ENCODE measurements at regions of chr6 and their contacts with region 1.

Region 1: DNA sequence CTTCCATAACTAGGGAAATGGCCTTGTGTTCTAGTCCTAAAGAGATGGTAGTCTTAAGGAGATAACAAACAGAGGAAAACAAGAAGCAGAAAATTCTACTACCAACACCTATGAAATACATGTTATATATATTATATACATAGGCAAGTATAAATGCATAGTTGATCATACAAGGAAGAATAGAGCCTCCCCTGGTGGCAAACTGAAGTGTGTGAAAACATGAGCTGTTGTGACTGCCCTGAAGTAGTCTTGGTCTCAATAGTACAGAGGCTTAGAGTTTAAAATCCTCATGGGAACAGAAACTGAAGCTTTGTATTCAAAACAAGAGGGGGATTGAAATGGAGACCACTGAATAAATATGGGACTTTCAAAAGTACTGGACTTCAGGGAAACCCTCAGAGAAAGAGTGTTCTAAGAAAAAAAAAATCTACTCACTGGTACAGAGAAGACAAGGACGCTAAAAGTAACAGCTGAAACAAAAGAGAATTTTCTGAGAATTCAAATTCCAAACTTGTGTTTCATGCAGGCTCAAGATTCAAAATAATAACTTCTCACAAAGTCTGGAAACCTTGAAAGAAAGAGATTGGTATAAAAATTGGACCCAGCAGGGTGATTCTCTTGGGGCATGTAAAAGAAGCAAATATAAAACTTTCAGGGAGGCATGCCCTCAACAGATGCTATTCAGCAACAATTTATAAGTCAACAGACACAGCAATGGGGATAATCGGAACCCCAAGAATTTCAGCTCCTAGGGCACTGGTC is 59.7 kb upstream of the SAMD3 start:
- DNase-seq: no peak
- ATAC-seq: peak; percentile 49
- H3K4me3 Mint-ChIP-seq: no peak overlapping the region
- H3K27ac Mint-ChIP-seq: no peak overlapping the region
- H3K4me1 Mint-ChIP-seq: peaks cover 6% of the 10 kb centered on the region
- H3K27me3 Mint-ChIP-seq: no peaks in the 10 kb centered on the region
- CTCF ChIP-seq: no peak

Region 2: DNA sequence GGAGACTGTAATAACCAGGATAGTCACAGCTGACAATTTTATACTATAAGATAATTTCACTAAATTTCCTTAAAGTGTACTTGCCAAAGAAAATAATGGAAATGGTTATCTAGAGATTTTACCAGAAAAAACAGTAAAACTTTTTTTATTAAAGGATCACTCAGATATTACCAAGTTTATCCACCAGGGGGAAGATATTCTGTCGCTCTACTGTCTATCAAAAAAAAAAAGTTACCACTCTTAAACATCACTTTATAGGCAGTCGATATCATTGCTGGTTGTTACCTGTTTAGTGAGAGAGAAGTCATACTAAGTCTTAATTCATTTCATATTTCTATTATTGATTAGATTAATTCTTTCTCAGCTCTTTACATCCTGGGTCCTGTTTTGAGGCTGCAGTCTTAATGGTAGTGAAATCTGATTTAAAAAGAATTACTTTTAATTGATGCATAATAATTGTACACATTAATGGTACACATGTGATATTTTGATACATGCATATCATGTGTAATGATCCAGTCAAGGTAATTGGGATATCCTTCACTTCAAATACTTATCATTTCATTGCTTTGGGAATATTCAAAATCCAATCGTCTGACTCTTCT is 245.1 kb before region 1 on chr6:
- CTCF ChIA-PET with region 1: interaction called, 4 read pairs
- POLR2A ChIA-PET with region 1: no interaction called
- intact Hi-C with region 1: loop called (anchors 1 kb)
- DNase-seq: no peak
- ATAC-seq: peak; percentile 49
- H3K4me3 Mint-ChIP-seq: no peak overlapping the region
- H3K27ac Mint-ChIP-seq: no peak overlapping the region
- H3K4me1 Mint-ChIP-seq: peaks cover 68% of the 10 kb centered on the region
- H3K27me3 Mint-ChIP-seq: no peaks in the 10 kb centered on the region
- CTCF ChIP-seq: no peak

Region 3: GRCh38 chr6:130076512-130076911 is 205.9 kb before region 1 on chr6:
- CTCF ChIA-PET with region 1: interaction called, 11 read pairs
- POLR2A ChIA-PET with region 1: no interaction called
- intact Hi-C with region 1: loop called (anchors 1 kb)
- DNase-seq: no peak
- ATAC-seq: no peak
- H3K4me3 Mint-ChIP-seq: no peak overlapping the region
- H3K27ac Mint-ChIP-seq: peak overlapping the region; percentile 38
- H3K4me1 Mint-ChIP-seq: peaks cover 18% of the 10 kb centered on the region
- H3K27me3 Mint-ChIP-seq: no peaks in the 10 kb centered on the region
- CTCF ChIP-seq: no peak

Region 4: DNA sequence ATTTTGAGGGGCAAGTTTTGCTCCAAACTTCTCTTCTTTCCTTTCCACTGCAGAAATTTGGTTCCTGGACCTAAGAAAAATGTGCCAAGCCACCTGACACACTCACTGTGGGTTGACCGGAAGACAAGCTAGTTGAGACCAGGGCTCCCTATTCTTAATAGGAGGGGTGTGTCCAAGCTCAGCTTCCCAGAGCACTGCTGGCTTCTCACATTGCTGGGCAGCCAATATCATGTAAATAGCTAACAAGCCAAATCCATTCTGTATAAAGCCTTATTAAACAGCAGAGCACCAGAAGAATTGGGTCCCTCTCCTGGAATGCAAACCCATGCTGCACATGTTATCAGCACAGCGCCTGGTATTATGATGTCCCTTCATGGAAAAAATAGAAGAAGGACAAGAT is 42.7 kb before region 1 on chr6:
- CTCF ChIA-PET with region 1: interaction called, 9 read pairs
- POLR2A ChIA-PET with region 1: no interaction called
- intact Hi-C with region 1: loop called (anchors 1 kb)
- DNase-seq: no peak
- ATAC-seq: no peak
- H3K4me3 Mint-ChIP-seq: no peak overlapping the region
- H3K27ac Mint-ChIP-seq: no peak overlapping the region
- H3K4me1 Mint-ChIP-seq: no peaks in the 10 kb centered on the region
- H3K27me3 Mint-ChIP-seq: no peaks in the 10 kb centered on the region
- CTCF ChIP-seq: no peak